ENCODE measurements at regions of chr11 and their contacts with region 1.

Region 1: GRCh38 chr11:82229341-82229740 is 504.3 kb downstream of the FAM181B start:
- DNase-seq: peak; percentile 56
- H3K4me3 Mint-ChIP-seq: no peak overlapping the region
- H3K27ac Mint-ChIP-seq: no peak overlapping the region
- H3K4me1 Mint-ChIP-seq: no peaks in the 10 kb centered on the region
- H3K27me3 Mint-ChIP-seq: no peaks in the 10 kb centered on the region

Region 2: GRCh38 chr11:81644239-81644840 is 585.0 kb before region 1 on chr11:
- intact Hi-C with region 1: loop called (anchors 1 kb)
- DNase-seq: peak; percentile 64
- H3K4me3 Mint-ChIP-seq: no peak overlapping the region
- H3K27ac Mint-ChIP-seq: no peak overlapping the region
- H3K4me1 Mint-ChIP-seq: no peaks in the 10 kb centered on the region
- H3K27me3 Mint-ChIP-seq: peaks cover 15% of the 10 kb centered on the region

Region 3: DNA sequence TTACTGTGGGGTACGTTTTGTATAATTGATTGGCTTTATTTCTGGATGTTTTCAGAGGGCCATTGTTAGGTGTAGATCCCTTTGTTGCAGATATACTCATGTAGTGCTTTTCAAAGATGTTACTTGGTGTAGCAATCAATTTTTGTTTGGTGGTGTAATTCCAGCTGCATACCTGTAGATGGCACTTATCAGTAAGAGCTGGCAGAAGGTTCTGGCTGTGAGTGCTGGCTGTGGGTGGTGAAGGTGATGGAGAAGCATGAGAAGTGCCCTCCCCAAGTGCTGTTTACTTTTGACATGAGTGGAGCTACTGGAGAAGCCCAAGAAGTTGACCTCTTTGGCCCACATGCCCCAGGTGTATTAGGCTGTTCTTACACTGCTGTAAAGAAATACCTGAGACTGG is 570.6 kb before region 1 on chr11:
- intact Hi-C with region 1: loop called (anchors 5 kb)
- DNase-seq: peak; percentile 62
- H3K4me3 Mint-ChIP-seq: no peak overlapping the region
- H3K27ac Mint-ChIP-seq: no peak overlapping the region
- H3K4me1 Mint-ChIP-seq: no peaks in the 10 kb centered on the region
- H3K27me3 Mint-ChIP-seq: no peaks in the 10 kb centered on the region

Region 4: DNA sequence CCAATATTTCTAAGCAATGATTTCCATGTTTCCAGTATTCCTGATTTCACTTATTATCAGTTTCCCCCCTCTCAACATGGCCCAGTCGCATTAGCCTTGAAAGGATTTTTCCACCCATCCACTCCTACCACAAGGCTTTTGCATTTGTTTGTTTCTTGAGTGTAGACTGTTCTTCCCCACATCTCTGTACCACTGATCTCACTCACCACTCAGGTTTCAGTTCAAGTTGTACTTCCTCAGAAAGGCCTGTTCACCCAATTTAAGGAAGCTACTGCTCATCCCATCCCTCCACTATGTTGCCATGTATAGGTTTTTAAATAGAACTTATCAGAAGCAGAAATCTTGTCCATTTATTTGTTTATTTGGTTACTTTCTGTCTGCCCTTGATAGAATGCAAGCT is 32.0 kb after region 1 on chr11:
- intact Hi-C with region 1: no loop called
- DNase-seq: no peak
- H3K4me3 Mint-ChIP-seq: no peak overlapping the region
- H3K27ac Mint-ChIP-seq: no peak overlapping the region
- H3K4me1 Mint-ChIP-seq: no peaks in the 10 kb centered on the region
- H3K27me3 Mint-ChIP-seq: no peaks in the 10 kb centered on the region

Measured in activated CD4-positive, alpha-beta T cell treated with anti-CD3 and anti-CD28 coated beads, Interleukin-2, amount 10 ng/mL, durations not matched to agents 24 days and 14 days (primary cell).